ENCODE measurements at regions of chr15 and their contacts with region 1.

Region 1: GRCh38 chr15:59656897-59657634 is at the start of gene GTF2A2:
- DNase-seq: peak; percentile 97
- H3K4me3 Mint-ChIP-seq: no peak within 1 kb of the TSS
- H3K27ac Mint-ChIP-seq: peak within 1 kb of the TSS; percentile 82
- H3K4me1 Mint-ChIP-seq: peaks cover 13% of the 10 kb centered on the region
- H3K27me3 Mint-ChIP-seq: no peaks in the 10 kb centered on the region
- total RNA-seq, gene GTF2A2: 113 to 117 TPM

Region 2: GRCh38 chr15:59384507-59384906 is 272.6 kb before region 1 on chr15:
- CTCF ChIA-PET with region 1: no interaction called
- POLR2A ChIA-PET with region 1: no interaction called
- DNase-seq: peak; percentile 49
- H3K4me3 Mint-ChIP-seq: no peak overlapping the region
- H3K27ac Mint-ChIP-seq: no peak overlapping the region
- H3K4me1 Mint-ChIP-seq: peaks cover 17% of the 10 kb centered on the region
- H3K27me3 Mint-ChIP-seq: peaks cover 17% of the 10 kb centered on the region

Region 3: DNA sequence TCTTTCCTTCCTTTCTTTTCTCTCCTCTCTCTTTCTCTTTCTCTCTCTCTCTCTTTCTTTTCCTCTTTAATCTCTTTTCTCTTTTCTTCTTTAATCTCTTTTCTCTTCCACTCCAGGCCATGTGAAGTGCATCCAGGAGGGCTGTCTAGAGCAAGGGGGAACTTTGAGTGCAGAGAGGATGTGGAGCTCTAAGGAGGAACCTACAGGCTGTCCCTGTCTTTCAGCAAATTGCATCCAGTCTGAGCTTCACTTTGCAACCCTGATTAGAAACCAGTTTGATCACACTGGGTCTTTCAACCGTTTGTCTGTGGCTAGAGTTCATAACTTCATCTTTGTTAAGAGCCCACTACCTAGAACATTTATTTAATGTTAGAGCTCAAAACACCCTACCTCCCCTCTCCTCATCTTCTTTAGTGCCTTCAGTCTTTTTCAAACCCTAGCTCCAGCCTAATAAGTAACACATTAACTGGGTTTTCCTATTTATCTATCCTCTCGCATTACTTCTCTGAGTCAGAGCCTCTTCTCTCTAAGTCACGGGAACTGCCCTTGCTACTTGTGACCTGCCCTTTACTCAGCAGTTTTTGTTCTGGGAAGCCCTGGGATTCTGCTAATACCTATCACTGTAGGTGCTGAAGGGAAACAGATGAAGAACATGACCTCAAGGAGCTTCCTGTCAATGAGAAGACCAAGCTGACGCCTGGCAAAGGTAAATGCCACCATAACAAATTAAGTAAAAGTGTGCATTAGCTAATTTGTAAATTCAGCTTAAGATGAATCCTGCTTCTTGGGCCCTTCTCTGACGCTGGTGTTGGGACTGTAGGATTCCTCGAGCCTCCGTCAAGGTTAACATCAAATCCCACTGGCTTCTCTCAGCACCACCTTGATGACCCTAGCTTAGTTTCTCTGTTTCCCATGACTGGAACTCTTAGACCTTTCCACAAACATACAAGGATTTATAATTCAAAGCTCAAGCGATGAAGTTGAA is 45.5 kb before region 1 on chr15 and contains the start of gene GCNT3:
- CTCF ChIA-PET with region 1: no interaction called
- POLR2A ChIA-PET with region 1: no interaction called
- DNase-seq: no peak
- H3K4me3 Mint-ChIP-seq: no peak within 1 kb of the TSS
- H3K27ac Mint-ChIP-seq: no peak within 1 kb of the TSS
- H3K4me1 Mint-ChIP-seq: peaks cover 6% of the 10 kb centered on the region
- H3K27me3 Mint-ChIP-seq: peaks cover 38% of the 10 kb centered on the region
- total RNA-seq, gene GCNT3: not detected

Region 4: GRCh38 chr15:59678620-59679019 is 21.6 kb after region 1 on chr15:
- CTCF ChIA-PET with region 1: no interaction called
- POLR2A ChIA-PET with region 1: interaction called, 11 read pairs
- DNase-seq: no peak
- H3K4me3 Mint-ChIP-seq: no peak overlapping the region
- H3K27ac Mint-ChIP-seq: peak overlapping the region; percentile 77
- H3K4me1 Mint-ChIP-seq: peaks cover 23% of the 10 kb centered on the region
- H3K27me3 Mint-ChIP-seq: no peaks in the 10 kb centered on the region